K562 (cell line): ENCODE measurements at regions of chr3 and their contacts with region 1.

Region 1: GRCh38 chr3:134794950-134795745 is at the start of gene EPHB1:
- DNase-seq: peak; percentile 64 to 75 (median 70)
- ATAC-seq: peak; percentile 98
- H3K4me3 ChIP-seq: no peak within 1 kb of the TSS
- H3K27ac ChIP-seq: no peak within 1 kb of the TSS
- H3K4me1 ChIP-seq: peaks cover 0 to 11% of the 10 kb centered on the region in 2 experiments; a peak in 2 of 5 replicates
- H3K27me3 ChIP-seq: peaks cover 0 to 8% of the 10 kb centered on the region in 2 experiments; a peak in 1 of 5 replicates
- CTCF ChIP-seq: peak; percentile 68 to 72 (median 71)
- EP300 ChIP-seq: no peak
- POLR2A ChIP-seq: no peak
- RAD21 ChIP-seq: peak; percentile 71 to 73
- polyA plus RNA-seq, gene EPHB1: not detected

Region 2: GRCh38 chr3:135240426-135240825 is 445.3 kb after region 1 on chr3:
- CTCF ChIA-PET with region 1: no interaction called
- POLR2A ChIA-PET with region 1: no interaction called
- in situ Hi-C with region 1: no loop called
- intact Hi-C with region 1: loop called (anchors 10 kb)
- DNase-seq: peak in 3 of 4 experiments; percentile 9 to 11 (median 10)
- ATAC-seq: 0 out of 3 replicates have a peak, but pooled peaks have one; percentile 33
- H3K4me3 ChIP-seq: no peak overlapping the region
- H3K27ac ChIP-seq: no peak overlapping the region
- H3K4me1 ChIP-seq: no peaks in the 10 kb centered on the region
- H3K27me3 ChIP-seq: no peaks in the 10 kb centered on the region
- CTCF ChIP-seq: peak; percentile 7 to 32 (median 31); a peak in 3 of 6 replicates
- EP300 ChIP-seq: no peak
- POLR2A ChIP-seq: no peak
- RAD21 ChIP-seq: 0 out of 4 replicates have a peak, but pooled peaks of 1 of the 2 experiments have one; percentile 18

Region 3: DNA sequence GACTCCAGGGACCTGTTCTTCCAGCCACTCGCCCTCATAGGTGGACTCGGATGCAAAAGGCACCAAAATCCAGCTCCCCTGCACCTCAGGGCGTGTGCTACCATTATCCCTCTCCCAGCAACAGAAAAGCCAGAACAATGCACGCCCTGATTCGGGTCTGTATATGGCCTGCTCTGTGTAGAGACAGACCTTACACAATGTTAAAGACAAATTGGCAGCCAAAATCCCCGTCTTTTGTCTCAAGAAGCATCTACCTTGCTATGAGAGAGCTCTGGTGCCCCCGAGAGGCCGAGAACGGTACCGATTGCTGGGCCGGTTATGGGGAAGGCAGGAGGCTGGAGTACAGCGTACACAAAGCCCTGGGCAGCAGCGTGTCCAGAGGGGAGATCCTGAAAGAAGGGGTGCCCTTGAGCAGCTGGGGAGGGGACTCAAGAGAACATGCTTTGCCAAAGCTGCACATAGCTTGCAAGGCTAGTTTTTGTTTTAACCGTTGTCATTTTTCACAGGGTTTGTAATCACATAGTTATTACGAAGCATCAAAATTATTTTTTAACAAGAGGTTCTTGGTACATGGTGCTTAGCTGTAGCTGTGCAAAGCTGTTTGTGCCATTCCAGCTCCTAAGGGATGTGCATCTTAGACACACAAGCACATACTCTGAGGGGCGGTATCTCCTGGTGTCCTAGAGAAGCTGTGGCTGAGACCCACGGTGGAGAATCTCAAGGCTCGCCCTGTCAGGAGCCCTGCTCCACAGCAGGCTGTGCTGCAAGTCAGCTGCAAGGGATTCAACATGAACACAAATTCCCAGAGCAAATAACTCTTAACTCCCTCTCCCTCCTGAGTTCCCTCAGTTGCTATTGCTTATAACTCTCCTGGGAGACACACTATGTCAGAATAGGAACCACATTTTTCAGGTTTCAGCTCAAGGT is 708.9 kb after region 1 on chr3:
- CTCF ChIA-PET with region 1: interaction called, 3 read pairs
- POLR2A ChIA-PET with region 1: no interaction called
- in situ Hi-C with region 1: no loop called
- intact Hi-C with region 1: loop called (anchors 5 kb)
- DNase-seq: peak; percentile 34 to 57 (median 43)
- ATAC-seq: peak; percentile 95
- H3K4me3 ChIP-seq: no peak overlapping the region
- H3K27ac ChIP-seq: no peak overlapping the region
- H3K4me1 ChIP-seq: no peaks in the 10 kb centered on the region
- H3K27me3 ChIP-seq: peaks cover 0 to 3% of the 10 kb centered on the region in 2 experiments; a peak in 1 of 5 replicates
- CTCF ChIP-seq: peak; percentile 56 to 63 (median 58)
- EP300 ChIP-seq: no peak
- POLR2A ChIP-seq: no peak
- RAD21 ChIP-seq: peak; percentile 46 to 54

Region 4: GRCh38 chr3:135895106-135895733 is 1100.1 kb after region 1 on chr3:
- CTCF ChIA-PET with region 1: interaction called, 3 read pairs
- POLR2A ChIA-PET with region 1: no interaction called
- in situ Hi-C with region 1: loop called (anchors 25 kb)
- intact Hi-C with region 1: loop called (anchors 10 kb)
- DNase-seq: peak; percentile 29 to 65 (median 44)
- ATAC-seq: peak; percentile 72
- H3K4me3 ChIP-seq: no peak overlapping the region
- H3K27ac ChIP-seq: no peak overlapping the region
- H3K4me1 ChIP-seq: no peaks in the 10 kb centered on the region
- H3K27me3 ChIP-seq: no peaks in the 10 kb centered on the region
- CTCF ChIP-seq: peak; percentile 52 to 76 (median 74)
- EP300 ChIP-seq: no peak
- POLR2A ChIP-seq: no peak
- RAD21 ChIP-seq: peak; percentile 55 to 79

Region 5: DNA sequence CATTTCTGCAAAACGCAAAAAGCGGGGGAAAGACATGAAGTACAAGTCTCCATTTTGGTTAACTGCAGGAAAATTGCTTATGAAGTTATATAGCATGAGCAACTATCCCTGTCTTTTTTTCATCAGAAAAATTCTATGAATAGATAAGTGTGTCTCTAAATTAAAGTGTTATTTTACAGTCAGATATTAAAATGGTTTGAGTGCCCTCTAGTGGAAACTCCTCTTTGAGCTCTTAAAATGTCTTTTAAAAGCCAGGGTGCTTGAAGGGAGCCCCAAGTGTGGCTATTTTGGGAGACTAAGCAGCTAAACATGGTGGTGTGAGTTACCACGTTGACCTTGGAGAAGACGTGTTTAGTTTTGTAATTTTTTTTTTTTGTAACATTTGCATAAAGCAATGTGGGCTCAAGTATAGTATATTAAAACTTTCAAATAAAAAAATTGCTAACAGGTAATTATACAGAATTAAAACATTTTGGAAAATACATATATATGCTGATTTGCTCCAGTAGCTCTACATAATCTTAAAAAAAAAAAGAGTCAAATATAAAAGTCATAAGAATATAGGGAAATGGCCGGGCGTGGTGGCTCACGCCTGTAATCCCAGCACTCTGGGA is 1247.6 kb after region 1 on chr3:
- CTCF ChIA-PET with region 1: no interaction called
- POLR2A ChIA-PET with region 1: no interaction called
- in situ Hi-C with region 1: no loop called
- intact Hi-C with region 1: loop called (anchors 10 kb)
- DNase-seq: peak; percentile 16 to 54 (median 24)
- ATAC-seq: peak; percentile 75
- H3K4me3 ChIP-seq: no peak overlapping the region
- H3K27ac ChIP-seq: no peak overlapping the region
- H3K4me1 ChIP-seq: no peaks in the 10 kb centered on the region
- H3K27me3 ChIP-seq: no peaks in the 10 kb centered on the region; a peak in 2 of 5 replicates
- CTCF ChIP-seq: peak; percentile 17 to 65 (median 52); a peak in 4 of 6 replicates
- EP300 ChIP-seq: no peak
- POLR2A ChIP-seq: no peak
- RAD21 ChIP-seq: peak; percentile 38 to 62